AG04449 (cell line): ENCODE measurements at regions of chr5 and their contacts with region 1.

Region 1: DNA sequence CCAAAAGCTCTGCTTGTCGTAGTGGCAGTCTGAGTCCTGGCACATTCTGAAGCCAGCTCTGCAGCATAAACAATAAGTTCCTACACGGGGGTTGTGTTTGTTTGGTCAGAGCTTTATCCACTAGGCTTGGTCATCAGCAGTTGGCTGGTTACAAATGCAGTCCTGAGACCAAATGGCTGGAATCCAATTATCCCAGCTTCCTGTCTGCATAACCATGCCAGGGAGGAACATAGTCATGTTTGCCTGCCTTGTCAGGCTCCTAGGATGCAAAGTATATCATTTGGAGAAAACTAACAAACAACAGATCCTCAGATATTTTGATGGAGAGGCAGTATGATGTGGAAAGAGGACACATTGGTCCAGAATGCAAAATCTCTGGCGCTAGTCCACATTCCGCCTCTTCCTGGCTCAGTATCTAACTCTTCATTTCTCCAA is 85.8 kb downstream of the FBXO38 start:
- DNase-seq: peak; percentile 4
- H3K4me3 ChIP-seq: no peak overlapping the region
- CTCF ChIP-seq: no peak

Region 2: DNA sequence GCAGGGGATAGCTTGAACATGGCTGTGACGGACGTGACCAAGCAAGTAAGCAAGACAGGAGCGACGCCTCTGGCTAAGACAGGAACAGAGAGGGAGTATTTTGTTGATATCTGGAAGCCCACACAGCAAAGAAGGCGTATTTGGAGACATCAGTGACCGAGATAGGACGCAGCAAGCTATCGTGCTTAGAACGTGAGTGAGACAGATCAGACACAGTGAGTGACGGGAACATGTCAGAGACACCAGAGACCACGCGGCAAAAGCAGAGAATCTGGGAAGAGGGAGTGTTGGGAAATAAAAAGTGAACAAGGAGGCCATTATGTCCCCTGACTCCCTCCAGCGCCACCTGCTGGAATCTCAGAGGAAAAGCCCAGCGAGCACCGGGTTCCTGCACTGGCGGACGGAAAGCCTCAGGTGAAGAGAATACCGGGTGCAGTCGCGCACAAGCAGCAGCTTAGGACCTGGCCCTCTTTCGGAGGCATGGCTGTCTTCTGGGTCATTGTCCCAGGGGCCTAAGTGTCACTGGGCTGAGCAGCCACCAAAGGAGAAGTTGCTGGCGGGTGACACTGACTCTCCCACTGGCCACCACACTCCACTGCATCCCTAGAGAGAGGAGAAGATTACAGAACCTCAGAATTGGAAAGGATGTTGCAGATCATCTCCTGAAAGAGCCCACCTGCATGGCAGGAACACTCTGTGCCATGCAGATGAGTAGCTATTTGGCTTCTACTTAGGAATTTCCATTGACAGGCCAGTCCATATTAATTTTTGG is 13.4 kb after region 1 on chr5:
- CTCF ChIA-PET with region 1: interaction called, 17 read pairs
- POLR2A ChIA-PET with region 1: no interaction called
- DNase-seq: no peak
- H3K4me3 ChIP-seq: no peak overlapping the region
- CTCF ChIP-seq: peak; percentile 75